ENCODE measurements at regions of chr6 and their contacts with region 1.

Region 1: GRCh38 chr6:112253841-112254816 is at the start of gene LAMA4:
- DNase-seq: peak; percentile 65 to 82 (median 71)
- ATAC-seq: peak; percentile 60 to 78 (median 74)
- H3K4me3 ChIP-seq: peak within 1 kb of the TSS; percentile 53 to 97 (median 73)
- H3K27ac ChIP-seq: peak within 1 kb of the TSS; percentile 86 to 98 (median 95)
- H3K4me1 ChIP-seq: peaks cover 6 to 54% (median 31%) of the 10 kb centered on the region in 12 donors
- H3K27me3 ChIP-seq: peaks cover 0 to 7% (median 0%) of the 10 kb centered on the region in 9 donors
- CTCF ChIP-seq: peak in 1 of 12 donors; percentile 4
- POLR2A ChIP-seq: peak in 1 of 2 donors; percentile 73
- total RNA-seq, gene LAMA4: 42.6 to 132 (median 77.7) TPM

Region 2: GRCh38 chr6:112193117-112193516 is 61.0 kb before region 1 on chr6:
- intact Hi-C with region 1: loop called in 5 of 10 experiments (anchors 5 to 10 kb)
- DNase-seq: peak in 2 of 5 donors; percentile 32
- ATAC-seq: peak; percentile 40 to 66 (median 56)
- H3K4me3 ChIP-seq: no peak overlapping the region
- H3K27ac ChIP-seq: peak overlapping the region in 6 of 12 donors; percentile 3 to 49 (median 39)
- H3K4me1 ChIP-seq: peaks cover 0 to 67% (median 24%) of the 10 kb centered on the region in 12 donors
- H3K27me3 ChIP-seq: no peaks in the 10 kb centered on the region
- CTCF ChIP-seq: no peak
- POLR2A ChIP-seq: no peak

Region 3: GRCh38 chr6:112203577-112204349 is 50.4 kb before region 1 on chr6:
- intact Hi-C with region 1: loop called in 2 of 10 experiments (anchors 5 to 10 kb)
- DNase-seq: no peak
- ATAC-seq: peak in 2 of 4 donors; percentile 35 to 50
- H3K4me3 ChIP-seq: no peak overlapping the region
- H3K27ac ChIP-seq: peak overlapping the region in 10 of 12 donors; percentile 7 to 65 (median 42)
- H3K4me1 ChIP-seq: peaks cover 4 to 46% (median 25%) of the 10 kb centered on the region in 12 donors
- H3K27me3 ChIP-seq: no peaks in the 10 kb centered on the region
- CTCF ChIP-seq: no peak
- POLR2A ChIP-seq: no peak

Region 4: GRCh38 chr6:112216699-112217551 is 37.2 kb before region 1 on chr6:
- intact Hi-C with region 1: loop called in 5 of 10 experiments (anchors 2 to 5 kb)
- DNase-seq: no peak
- ATAC-seq: peak; percentile 9 to 56 (median 14)
- H3K4me3 ChIP-seq: no peak overlapping the region
- H3K27ac ChIP-seq: peak overlapping the region; percentile 22 to 87 (median 52)
- H3K4me1 ChIP-seq: peaks cover 19 to 90% (median 74%) of the 10 kb centered on the region in 12 donors
- H3K27me3 ChIP-seq: no peaks in the 10 kb centered on the region
- CTCF ChIP-seq: no peak
- POLR2A ChIP-seq: no peak

Region 5: DNA sequence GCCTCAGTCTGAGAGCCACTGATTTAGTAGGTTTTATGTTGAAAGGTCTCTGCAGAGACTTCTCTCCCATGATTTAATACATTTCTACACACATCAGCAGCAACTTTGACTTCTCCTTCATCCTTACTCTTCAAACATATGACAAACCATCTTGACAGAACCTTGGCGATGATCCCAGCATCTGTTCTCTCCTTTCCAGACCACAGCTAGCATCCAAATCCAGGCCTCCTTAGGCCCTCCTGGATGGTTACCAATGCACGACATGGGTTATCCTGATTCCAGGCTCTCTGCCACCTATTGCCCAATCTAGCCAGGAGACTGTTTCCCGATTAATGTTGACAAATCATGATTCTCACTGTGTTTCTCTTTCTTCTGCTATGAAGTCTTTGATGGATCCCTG is 16.5 kb before region 1 on chr6:
- intact Hi-C with region 1: loop called in 1 of 10 experiments (anchors 2 kb)
- DNase-seq: peak in 4 of 5 donors; percentile 53 to 84 (median 70)
- ATAC-seq: peak in 3 of 4 donors; percentile 31 to 77 (median 70)
- H3K4me3 ChIP-seq: no peak overlapping the region
- H3K27ac ChIP-seq: peak overlapping the region; percentile 27 to 88 (median 82)
- H3K4me1 ChIP-seq: peaks cover 32 to 88% (median 76%) of the 10 kb centered on the region in 12 donors
- H3K27me3 ChIP-seq: no peaks in the 10 kb centered on the region
- CTCF ChIP-seq: no peak
- POLR2A ChIP-seq: no peak